IMR-90 (cell line): ENCODE measurements at regions of chr1 and their contacts with region 1.

Region 1: GRCh38 chr1:192265516-192266173 is 51.1 kb upstream of the RGS21 start:
- DNase-seq: no peak
- ATAC-seq: no peak
- H3K4me3 ChIP-seq: no peak overlapping the region
- H3K27ac ChIP-seq: no peak overlapping the region
- H3K4me1 ChIP-seq: no peaks in the 10 kb centered on the region
- H3K27me3 ChIP-seq: no peaks in the 10 kb centered on the region
- CTCF ChIP-seq: no peak
- POLR2A ChIP-seq: no peak
- RAD21 ChIP-seq: no peak

Region 2: DNA sequence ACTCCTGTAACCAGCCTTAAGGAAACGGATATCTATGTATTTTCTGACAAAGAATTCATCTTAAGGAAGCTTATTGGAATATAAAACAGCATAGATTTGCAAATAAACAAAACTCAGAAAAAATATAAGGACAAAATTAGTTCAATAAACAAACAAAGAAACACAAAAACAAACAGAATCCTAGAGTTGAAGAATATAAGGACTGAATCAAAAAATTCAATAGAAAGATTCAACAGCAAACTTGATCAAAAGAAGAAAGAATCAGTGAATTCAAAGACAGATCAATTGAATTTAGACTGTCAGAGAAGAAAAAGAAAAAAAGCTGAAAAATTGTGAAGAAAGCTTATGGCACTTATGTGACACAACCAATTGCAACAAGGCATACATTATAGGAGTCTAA is 877.4 kb before region 1 on chr1:
- CTCF ChIA-PET with region 1: no interaction called
- POLR2A ChIA-PET with region 1: no interaction called
- dilution Hi-C with region 1: no loop called
- in situ Hi-C with region 1: no loop called
- intact Hi-C with region 1: no loop called
- DNase-seq: no peak
- ATAC-seq: no peak
- H3K4me3 ChIP-seq: no peak overlapping the region
- H3K27ac ChIP-seq: no peak overlapping the region
- H3K4me1 ChIP-seq: no peaks in the 10 kb centered on the region
- H3K27me3 ChIP-seq: no peaks in the 10 kb centered on the region
- CTCF ChIP-seq: no peak
- POLR2A ChIP-seq: no peak
- RAD21 ChIP-seq: no peak

Region 3: GRCh38 chr1:192243721-192244120 is 21.9 kb before region 1 on chr1:
- CTCF ChIA-PET with region 1: interaction called, 10 read pairs
- POLR2A ChIA-PET with region 1: no interaction called
- dilution Hi-C with region 1: no loop called
- in situ Hi-C with region 1: no loop called
- intact Hi-C with region 1: no loop called
- DNase-seq: peak; percentile 21
- ATAC-seq: no peak
- H3K4me3 ChIP-seq: no peak overlapping the region
- H3K27ac ChIP-seq: no peak overlapping the region
- H3K4me1 ChIP-seq: no peaks in the 10 kb centered on the region
- H3K27me3 ChIP-seq: no peaks in the 10 kb centered on the region
- CTCF ChIP-seq: no peak
- POLR2A ChIP-seq: no peak
- RAD21 ChIP-seq: no peak